ENCODE measurements at regions of chr3 and their contacts with region 1.

Region 1: DNA sequence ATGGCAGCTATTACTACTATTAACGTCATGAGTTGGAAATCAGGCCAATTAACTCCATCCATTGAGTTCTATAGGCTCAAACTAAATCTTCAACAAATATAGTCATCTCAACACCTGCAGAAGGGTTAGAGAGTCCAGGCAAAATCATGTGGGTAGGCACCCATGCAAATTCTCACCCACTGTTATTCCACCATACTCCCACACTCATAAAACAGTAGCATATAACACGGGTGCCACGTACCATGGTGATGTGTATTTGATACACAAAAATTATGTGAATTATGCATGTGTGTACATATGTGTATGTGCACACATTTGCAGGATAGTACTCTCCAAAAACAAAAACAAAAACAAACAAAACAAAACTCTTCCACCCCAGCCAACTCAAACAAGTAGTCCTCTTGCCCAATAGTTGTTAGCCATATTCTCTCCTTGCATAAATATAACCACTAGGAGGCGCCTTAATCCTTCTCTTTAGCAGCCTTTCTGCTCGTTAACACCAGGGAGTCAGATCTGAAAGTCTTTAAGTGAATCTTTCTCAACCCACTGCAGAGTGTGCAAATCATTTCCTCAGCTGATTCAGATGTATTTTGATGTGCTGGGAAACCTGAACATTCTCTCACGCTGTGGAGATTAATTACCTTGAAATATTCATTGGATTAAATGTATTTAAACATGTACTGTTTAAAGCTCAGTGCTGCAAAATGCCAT is 38.0 kb upstream of the COPB2 start:
- DNase-seq: no peak
- H3K4me3 Mint-ChIP-seq: no peak overlapping the region
- H3K27ac Mint-ChIP-seq: no peak overlapping the region
- H3K4me1 Mint-ChIP-seq: peaks cover 2% of the 10 kb centered on the region
- H3K27me3 Mint-ChIP-seq: no peaks in the 10 kb centered on the region

Region 2: GRCh38 chr3:139378587-139379241 is 48.7 kb before region 1 on chr3:
- CTCF ChIA-PET with region 1: no interaction called
- POLR2A ChIA-PET with region 1: no interaction called
- intact Hi-C with region 1: no loop called
- DNase-seq: no peak
- H3K4me3 Mint-ChIP-seq: no peak overlapping the region
- H3K27ac Mint-ChIP-seq: no peak overlapping the region
- H3K4me1 Mint-ChIP-seq: peaks cover 32% of the 10 kb centered on the region
- H3K27me3 Mint-ChIP-seq: no peaks in the 10 kb centered on the region

Region 3: DNA sequence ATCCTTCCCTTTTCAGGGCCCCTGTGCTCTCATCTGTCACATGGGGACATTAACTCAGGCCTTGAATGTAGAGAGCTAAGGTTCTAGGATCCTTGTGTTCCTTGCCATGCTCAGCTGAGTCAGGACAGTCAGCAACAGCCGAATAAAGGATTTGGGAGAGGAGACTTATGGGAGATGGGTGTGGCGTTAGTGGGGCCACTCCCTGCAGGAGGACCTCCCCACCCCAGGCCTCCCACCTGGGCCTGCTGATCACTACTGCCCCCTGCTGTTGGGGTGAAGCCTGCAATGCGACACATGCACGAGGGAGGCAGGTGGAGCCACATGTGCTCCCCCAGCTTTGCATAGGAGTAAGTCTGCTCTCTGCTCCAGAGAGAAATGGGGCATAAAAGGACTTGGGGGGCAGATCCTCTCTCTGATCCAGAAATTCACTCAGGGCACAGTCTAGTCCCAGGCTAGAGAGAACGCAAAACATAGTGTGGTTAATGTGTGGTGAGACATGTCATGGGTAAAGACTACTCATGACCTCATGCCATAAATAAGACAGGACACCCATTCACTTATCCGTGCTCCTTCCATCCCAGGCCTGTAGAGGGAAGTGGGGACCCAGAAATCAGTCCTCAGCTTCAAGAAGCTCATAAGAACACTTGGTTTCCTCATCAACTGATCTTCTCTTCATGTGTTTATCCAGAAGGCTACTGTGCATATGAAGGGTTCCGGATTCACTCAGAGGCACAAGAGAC is 92.7 kb after region 1 on chr3:
- CTCF ChIA-PET with region 1: no interaction called
- POLR2A ChIA-PET with region 1: no interaction called
- intact Hi-C with region 1: loop called (anchors 10 kb)
- DNase-seq: peak; percentile 34
- H3K4me3 Mint-ChIP-seq: no peak overlapping the region
- H3K27ac Mint-ChIP-seq: no peak overlapping the region
- H3K4me1 Mint-ChIP-seq: no peaks in the 10 kb centered on the region
- H3K27me3 Mint-ChIP-seq: peaks cover 2% of the 10 kb centered on the region

Region 4: DNA sequence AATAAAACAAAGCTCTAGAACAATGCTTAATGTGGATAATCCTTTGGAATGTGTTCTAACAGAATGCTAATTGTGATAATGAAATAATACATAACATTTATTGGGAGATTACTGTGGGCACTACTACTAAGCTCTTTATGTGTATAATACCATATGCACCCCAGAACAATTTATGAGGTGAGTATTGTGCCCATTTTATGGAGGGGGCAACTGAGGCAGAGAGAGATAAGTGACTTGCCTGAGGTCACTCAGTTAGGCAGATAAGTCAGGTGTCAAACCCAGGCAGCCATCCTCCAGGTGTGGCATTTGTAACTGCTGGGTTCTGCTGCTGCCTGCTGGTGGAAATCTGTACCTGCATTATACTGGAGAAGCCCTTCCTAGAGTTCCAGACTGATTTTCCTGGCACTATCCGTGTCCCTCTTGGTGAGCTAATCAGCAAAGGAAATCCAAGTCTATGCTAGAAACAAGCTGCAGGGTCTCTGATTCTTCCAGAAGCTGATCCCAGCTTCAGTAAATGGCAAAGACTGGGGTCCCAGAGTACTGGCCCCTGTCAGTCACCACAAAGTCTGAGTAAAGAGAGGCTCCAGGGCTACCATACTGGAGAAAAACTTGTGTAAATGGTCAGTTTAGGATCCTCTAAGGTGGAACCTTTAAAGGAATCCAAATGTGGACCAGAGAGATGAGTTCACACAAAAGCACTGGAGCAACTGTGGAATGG is 134.7 kb after region 1 on chr3:
- CTCF ChIA-PET with region 1: interaction called, 14 read pairs
- POLR2A ChIA-PET with region 1: no interaction called
- intact Hi-C with region 1: loop called (anchors 1 kb)
- DNase-seq: no peak
- H3K4me3 Mint-ChIP-seq: no peak overlapping the region
- H3K27ac Mint-ChIP-seq: no peak overlapping the region
- H3K4me1 Mint-ChIP-seq: no peaks in the 10 kb centered on the region
- H3K27me3 Mint-ChIP-seq: no peaks in the 10 kb centered on the region

Measured in activated CD4-positive, alpha-beta memory T cell treated with anti-CD3 and anti-CD28 coated beads for 36 hours (primary cell).